Activated CD4-positive, alpha-beta T cell treated with anti-CD3 and anti-CD28 coated beads for 36 hours (primary cell): ENCODE measurements at regions of chr16 and their contacts with region 1.

Region 1: DNA sequence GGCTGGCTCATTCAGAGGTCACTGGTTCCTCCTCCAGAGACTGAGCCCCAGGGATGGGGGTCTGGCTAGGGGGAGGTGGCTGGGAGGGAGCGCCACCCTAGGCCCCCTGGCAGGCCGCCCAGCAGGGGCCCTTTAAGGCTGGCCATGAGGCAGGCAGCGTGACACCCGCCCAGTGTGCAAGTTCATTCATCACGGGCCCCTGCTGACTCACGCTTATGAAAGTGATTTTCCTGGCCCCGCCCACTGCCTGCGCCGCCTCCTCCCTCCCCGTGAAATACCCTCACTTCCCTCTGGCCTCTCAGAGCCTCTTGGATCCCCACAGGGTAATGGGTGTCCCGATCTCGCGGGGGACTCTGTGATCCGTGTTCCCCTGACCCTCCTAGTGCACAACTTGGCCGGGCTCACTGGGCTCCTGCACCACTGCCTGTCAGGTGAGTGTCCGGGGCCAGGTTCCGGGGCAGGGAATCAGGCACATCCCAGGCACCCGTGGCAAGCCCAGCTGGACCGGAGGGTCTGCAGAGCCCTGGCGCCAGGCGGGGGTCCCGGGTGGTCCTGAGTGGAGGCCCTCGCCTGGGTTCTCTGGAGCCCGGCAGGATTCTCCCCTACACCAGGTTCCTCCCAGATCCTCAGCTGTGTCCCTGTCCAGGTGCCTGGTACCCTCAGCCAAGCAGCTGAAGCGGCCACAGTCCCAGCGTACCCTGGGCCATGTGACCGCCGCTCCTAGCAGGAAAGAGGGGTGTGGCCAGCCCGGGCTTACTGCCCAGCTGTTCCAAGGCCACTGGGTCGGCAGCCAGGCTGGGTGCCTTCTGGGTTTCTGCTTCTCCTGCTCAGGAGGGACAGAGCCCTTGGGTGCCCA is at the start of gene OSGIN1:
- DNase-seq: peak; percentile 94
- ATAC-seq: peak; percentile 95
- H3K4me3 Mint-ChIP-seq: peak within 1 kb of the TSS; percentile 66
- H3K27ac Mint-ChIP-seq: peak within 1 kb of the TSS; percentile 55
- H3K4me1 Mint-ChIP-seq: peaks cover 19% of the 10 kb centered on the region
- H3K27me3 Mint-ChIP-seq: peaks cover 16% of the 10 kb centered on the region
- total RNA-seq, gene OSGIN1: 0.75 to 1.0 TPM

Region 2: DNA sequence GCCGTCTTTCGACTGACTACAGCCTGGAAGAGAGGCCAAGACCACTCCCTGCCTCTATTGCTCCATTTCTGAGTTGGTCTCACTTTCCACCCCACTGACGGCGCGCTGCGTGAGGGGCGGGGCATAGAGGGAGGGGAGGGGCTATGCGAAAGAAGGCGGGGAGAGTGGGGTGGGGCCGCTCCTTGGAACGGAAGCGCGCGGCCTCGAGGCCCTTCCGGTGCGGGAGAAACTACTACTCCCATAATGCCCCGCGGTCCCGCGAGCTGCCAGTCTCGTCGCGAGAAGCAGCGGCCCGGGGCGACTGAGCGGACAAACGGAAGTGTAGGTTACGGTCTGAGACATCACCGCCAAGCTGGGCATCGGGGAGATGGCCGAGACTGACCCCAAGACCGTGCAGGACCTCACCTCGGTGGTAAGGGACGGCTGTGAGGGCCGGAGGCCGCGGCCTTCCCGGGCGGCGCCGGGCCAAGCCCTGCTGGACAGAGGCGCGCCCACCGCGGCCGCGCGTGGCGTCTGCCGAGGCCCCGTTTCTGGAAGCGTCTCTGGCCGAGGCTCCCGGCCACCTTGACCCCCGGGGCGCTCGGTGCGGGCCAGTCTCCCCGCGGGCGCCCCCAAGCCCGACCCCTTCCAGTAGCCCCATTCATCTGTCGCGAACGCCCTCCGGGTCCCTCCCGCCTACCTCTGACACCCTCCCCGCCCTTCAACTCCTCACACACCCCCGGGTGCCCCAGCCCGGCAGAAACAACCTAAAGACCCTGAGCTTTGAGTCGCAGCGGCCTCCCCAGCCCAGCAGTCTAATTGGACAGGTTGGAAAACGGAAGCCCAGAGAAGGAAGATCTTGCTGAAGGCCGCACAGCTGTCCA is 145.2 kb before region 1 on chr16 and contains the start of gene HSBP1:
- CTCF ChIA-PET with region 1: interaction called, 3 read pairs
- POLR2A ChIA-PET with region 1: no interaction called
- intact Hi-C with region 1: loop called in 1 of 2 experiments (anchors 1 kb)
- DNase-seq: peak; percentile 97
- ATAC-seq: peak; percentile 98
- H3K4me3 Mint-ChIP-seq: peak within 1 kb of the TSS; percentile 98
- H3K27ac Mint-ChIP-seq: peak within 1 kb of the TSS; percentile 93
- H3K4me1 Mint-ChIP-seq: peaks cover 31% of the 10 kb centered on the region
- H3K27me3 Mint-ChIP-seq: peaks cover under 1% of the 10 kb centered on the region
- total RNA-seq, gene HSBP1: 73.1 to 80.7 TPM

Region 3: DNA sequence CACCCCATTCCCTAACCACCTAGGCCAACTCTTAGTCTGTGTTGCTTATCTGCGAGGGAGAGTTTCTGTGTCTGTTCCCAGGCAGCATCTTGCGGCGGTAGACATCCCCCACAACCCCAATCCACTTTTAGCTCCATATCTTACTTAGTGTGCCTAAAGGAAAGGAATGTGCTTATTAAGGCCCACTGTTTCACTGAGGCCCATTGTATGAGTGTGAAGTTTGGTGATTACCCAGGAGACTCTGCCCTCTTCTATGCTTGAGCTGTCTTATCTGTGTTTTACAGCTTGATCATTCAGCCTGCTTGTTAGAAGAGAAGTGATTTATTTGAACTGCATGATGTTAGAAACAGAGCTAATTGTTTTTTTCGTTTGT is 64.5 kb before region 1 on chr16:
- CTCF ChIA-PET with region 1: no interaction called
- POLR2A ChIA-PET with region 1: no interaction called
- intact Hi-C with region 1: no loop called
- DNase-seq: no peak
- ATAC-seq: no peak
- H3K4me3 Mint-ChIP-seq: no peak overlapping the region
- H3K27ac Mint-ChIP-seq: no peak overlapping the region
- H3K4me1 Mint-ChIP-seq: no peaks in the 10 kb centered on the region
- H3K27me3 Mint-ChIP-seq: peaks cover 6% of the 10 kb centered on the region

Region 4: DNA sequence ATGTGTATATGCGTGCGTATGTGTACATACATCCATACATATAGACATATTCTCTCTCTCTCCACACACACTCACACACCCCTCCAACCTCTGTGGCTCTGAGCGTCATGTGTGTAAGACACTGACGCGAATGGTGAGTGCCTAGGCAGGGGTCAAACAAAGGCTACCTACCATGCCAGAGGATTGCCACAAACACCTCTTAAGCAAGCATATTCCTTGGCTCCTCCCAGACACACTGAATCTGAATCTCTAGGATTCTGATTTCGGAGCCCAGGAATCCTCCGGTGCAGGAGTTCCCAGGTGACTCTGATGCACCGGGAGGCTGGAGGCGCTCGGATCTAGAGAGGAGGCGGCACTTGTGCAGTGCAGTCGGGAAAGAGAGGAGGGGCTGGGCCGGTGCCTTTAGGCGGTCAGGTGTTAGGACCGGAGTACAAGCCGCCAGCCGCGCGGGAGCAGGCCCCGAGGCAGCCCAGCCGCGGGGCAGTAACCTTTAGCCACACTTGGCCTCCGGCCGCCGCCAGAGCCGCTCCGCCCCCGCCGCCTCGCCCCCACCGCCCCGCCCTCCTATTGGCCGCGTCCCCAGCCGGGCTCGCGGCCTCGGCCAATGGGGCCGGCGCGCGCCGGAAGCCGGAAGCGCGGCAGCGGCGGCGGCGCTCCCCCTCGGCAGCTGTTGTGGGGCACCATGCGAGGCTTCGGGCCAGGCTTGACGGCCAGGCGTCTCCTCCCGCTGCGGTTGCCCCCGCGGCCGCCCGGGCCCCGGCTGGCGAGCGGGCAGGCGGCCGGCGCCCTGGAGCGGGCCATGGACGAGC is 54.5 kb before region 1 on chr16 and contains the start of gene MLYCD:
- CTCF ChIA-PET with region 1: no interaction called
- POLR2A ChIA-PET with region 1: no interaction called
- intact Hi-C with region 1: loop called in 1 of 2 experiments (anchors 1 kb)
- DNase-seq: peak; percentile 82
- ATAC-seq: peak; percentile 95
- H3K4me3 Mint-ChIP-seq: peak within 1 kb of the TSS; percentile 96
- H3K27ac Mint-ChIP-seq: peak within 1 kb of the TSS; percentile 83
- H3K4me1 Mint-ChIP-seq: peaks cover 28% of the 10 kb centered on the region
- H3K27me3 Mint-ChIP-seq: peaks cover 3% of the 10 kb centered on the region
- total RNA-seq, gene MLYCD: 3.3 to 3.8 TPM

Region 5: GRCh38 chr16:84055366-84055765 is 102.2 kb after region 1 on chr16:
- CTCF ChIA-PET with region 1: interaction called, 11 read pairs
- POLR2A ChIA-PET with region 1: no interaction called
- intact Hi-C with region 1: no loop called
- DNase-seq: no peak
- ATAC-seq: no peak
- H3K4me3 Mint-ChIP-seq: no peak overlapping the region
- H3K27ac Mint-ChIP-seq: no peak overlapping the region
- H3K4me1 Mint-ChIP-seq: no peaks in the 10 kb centered on the region
- H3K27me3 Mint-ChIP-seq: no peaks in the 10 kb centered on the region

Region 6: GRCh38 chr16:84144859-84145639 is 191.9 kb after region 1 on chr16 and contains the starts of genes DNAAF1 and HSDL1:
- CTCF ChIA-PET with region 1: no interaction called
- POLR2A ChIA-PET with region 1: no interaction called
- intact Hi-C with region 1: loop called in 1 of 2 experiments (anchors 1 kb)
- DNase-seq: peak; percentile 96
- ATAC-seq: peak; percentile 84
- H3K4me3 Mint-ChIP-seq: peak within 1 kb of the TSS; percentile 95
- H3K27ac Mint-ChIP-seq: peak within 1 kb of the TSS; percentile 72
- H3K4me1 Mint-ChIP-seq: peaks cover 12% of the 10 kb centered on the region
- H3K27me3 Mint-ChIP-seq: peaks cover 4% of the 10 kb centered on the region
- total RNA-seq, gene DNAAF1: 0.39 TPM in 1 of 2 experiments, not detected in the other
- total RNA-seq, gene HSDL1: 7.4 to 11.4 TPM

Region 7: DNA sequence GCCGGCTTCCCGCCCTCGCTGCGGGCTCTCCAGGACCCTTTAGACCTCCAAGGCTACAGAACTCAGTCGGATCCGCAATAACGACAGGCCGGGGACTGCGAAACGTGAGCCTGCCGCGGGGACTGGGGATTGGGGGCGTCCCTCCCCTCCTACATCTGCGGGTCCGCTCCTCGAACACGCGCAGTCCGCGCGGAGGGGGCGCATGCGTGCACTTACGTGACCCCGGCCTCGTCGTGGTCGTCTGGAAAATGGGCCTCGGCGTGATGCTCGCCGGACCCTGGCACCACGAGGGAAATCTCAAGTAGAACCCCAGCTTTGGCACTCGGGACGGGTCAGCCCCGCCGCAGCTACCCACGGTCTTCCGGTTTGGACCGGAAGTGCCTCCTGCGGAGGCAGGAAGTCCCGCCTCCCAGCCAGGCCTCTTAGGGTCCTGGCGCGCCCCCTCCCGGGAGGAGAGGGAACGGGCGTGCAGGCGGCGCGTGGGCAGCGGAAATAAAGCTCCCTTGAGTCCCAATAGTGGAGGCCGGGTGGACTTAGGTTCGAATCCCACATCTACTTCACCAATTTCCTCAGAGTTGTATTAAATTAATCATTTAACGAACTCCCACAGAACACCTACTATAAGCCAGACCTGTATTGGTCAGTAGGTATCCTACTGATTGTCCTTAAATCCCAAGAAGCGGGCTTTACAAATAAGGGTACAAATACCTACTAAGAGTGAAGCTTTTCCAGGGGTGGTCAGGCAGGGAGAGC is 233.7 kb after region 1 on chr16 and contains the start of gene TAF1C:
- CTCF ChIA-PET with region 1: interaction called, 8 read pairs
- POLR2A ChIA-PET with region 1: no interaction called
- intact Hi-C with region 1: loop called (anchors 1 to 5 kb)
- DNase-seq: peak; percentile 95
- ATAC-seq: peak; percentile 96
- H3K4me3 Mint-ChIP-seq: peak within 1 kb of the TSS; percentile 94
- H3K27ac Mint-ChIP-seq: peak within 1 kb of the TSS; percentile 94
- H3K4me1 Mint-ChIP-seq: peaks cover 16% of the 10 kb centered on the region
- H3K27me3 Mint-ChIP-seq: no peaks in the 10 kb centered on the region
- total RNA-seq, gene TAF1C: 44.4 to 45.7 TPM